Activated B cell treated with CpG ODN at 0.5 μM for 24 hours (primary cell): ENCODE measurements at regions of chr7 and their contacts with region 1.

Region 1: DNA sequence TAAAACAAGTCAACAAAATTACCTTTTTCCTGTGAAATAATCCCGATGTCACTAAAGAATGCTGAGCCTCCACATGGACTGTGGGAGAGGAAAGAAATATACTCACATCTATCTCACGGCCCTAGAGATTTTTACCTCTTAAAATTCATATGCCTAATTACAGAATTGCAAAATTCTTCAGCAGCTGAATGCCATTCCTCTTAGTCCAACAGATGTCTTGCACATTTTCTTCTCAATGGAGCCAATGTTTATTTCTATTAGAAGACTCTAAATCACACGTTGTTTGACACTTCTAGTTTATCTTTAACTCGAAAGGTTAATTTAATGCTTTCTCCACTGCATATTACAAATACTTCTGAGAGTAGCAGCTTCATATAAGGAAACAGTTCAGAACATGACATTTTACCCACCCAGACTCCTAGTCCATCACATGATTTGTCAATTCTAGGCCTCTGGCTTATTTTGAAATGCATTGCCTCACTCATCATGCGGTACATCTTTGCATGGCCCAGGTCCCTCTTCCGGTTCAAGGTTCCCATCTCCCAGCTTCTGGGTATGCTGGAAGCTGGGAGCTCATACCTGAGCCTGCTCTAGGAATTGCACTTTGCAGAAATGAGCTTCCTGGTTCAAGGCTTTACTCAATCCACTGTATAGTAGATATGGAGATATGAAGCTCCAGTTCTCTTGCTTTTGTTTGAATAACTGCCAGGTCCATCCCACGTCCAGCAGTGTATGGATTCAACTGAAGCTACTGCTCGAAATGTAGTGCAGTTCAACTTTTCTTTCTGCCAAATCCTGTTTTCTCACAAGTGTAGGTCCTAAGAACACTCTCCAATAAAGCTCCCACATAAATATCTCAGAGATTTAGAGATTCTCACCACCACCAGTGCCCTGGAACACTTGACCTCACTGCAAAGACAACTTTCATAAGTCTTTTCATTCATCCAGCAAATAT is 306.2 kb downstream of the GPR37 start:
- DNase-seq: no peak
- ATAC-seq: no peak
- H3K4me3 Mint-ChIP-seq: no peak overlapping the region
- H3K27ac Mint-ChIP-seq: no peak overlapping the region
- H3K4me1 Mint-ChIP-seq: no peaks in the 10 kb centered on the region
- H3K27me3 Mint-ChIP-seq: no peaks in the 10 kb centered on the region
- CTCF ChIP-seq: no peak

Region 2: DNA sequence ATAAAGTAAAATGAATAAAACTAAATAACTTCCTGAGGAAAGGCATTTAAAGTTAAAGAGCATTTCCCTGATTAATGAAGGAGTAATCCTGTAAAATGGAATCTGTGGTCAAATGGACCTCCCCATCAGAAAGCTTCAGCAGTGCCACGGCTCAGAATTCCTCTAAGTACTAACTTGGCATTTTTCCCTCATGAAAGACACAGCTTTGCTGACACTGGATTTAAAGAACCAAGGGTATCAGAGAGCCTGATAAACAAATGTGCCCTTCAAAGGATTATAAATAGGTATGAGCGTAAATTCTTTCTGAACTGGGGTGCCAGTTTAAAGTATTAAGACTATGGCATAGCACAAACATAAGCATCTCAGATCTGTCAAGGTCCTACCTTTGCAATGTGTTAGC is 1732.5 kb before region 1 on chr7:
- CTCF ChIA-PET with region 1: no interaction called
- POLR2A ChIA-PET with region 1: interaction called, 11 read pairs
- intact Hi-C with region 1: no loop called
- DNase-seq: no peak
- ATAC-seq: no peak
- H3K4me3 Mint-ChIP-seq: no peak overlapping the region
- H3K27ac Mint-ChIP-seq: no peak overlapping the region
- H3K4me1 Mint-ChIP-seq: no peaks in the 10 kb centered on the region
- H3K27me3 Mint-ChIP-seq: no peaks in the 10 kb centered on the region
- CTCF ChIP-seq: no peak